AG04449 (cell line): ENCODE measurements at regions of chr3 and their contacts with region 1.

Region 1: DNA sequence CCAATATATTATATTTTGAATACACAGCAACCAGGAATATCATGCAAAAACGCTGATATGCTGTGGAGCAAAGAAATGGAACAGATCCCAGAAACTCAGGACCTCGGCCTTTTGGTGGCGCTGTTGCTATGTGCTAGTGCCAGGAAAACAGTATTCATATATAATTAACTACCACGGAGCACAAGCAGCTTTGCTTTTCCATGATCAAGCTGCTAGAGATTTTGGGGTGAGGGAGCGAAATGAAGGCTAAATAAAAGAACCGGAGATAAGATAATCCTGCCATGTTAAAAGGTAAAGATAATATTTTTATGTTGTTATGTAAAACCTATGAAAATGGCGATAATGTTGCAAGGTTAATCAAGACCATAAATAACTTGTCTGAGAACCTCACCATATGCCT is 157.7 kb upstream of the FAM3D start:
- DNase-seq: no peak
- H3K4me3 ChIP-seq: no peak overlapping the region
- CTCF ChIP-seq: peak; percentile 68

Region 2: GRCh38 chr3:58722561-58722960 is 101.7 kb before region 1 on chr3:
- CTCF ChIA-PET with region 1: no interaction called
- POLR2A ChIA-PET with region 1: no interaction called
- DNase-seq: no peak
- H3K4me3 ChIP-seq: no peak overlapping the region
- CTCF ChIP-seq: no peak

Region 3: GRCh38 chr3:58835086-58835485 is 10.8 kb after region 1 on chr3:
- CTCF ChIA-PET with region 1: interaction called, 55 read pairs
- POLR2A ChIA-PET with region 1: no interaction called
- DNase-seq: peak; percentile 40
- H3K4me3 ChIP-seq: no peak overlapping the region
- CTCF ChIP-seq: no peak

Region 4: GRCh38 chr3:58994746-58995330 is 170.6 kb after region 1 on chr3:
- CTCF ChIA-PET with region 1: interaction called, 14 read pairs
- POLR2A ChIA-PET with region 1: no interaction called
- DNase-seq: no peak
- H3K4me3 ChIP-seq: no peak overlapping the region
- CTCF ChIP-seq: peak; percentile 75

Region 5: GRCh38 chr3:59143447-59143846 is 319.2 kb after region 1 on chr3:
- CTCF ChIA-PET with region 1: no interaction called
- POLR2A ChIA-PET with region 1: no interaction called
- DNase-seq: no peak
- H3K4me3 ChIP-seq: no peak overlapping the region
- CTCF ChIP-seq: peak; percentile 13